ENCODE measurements at regions of chr7 and their contacts with region 1.

Region 1: DNA sequence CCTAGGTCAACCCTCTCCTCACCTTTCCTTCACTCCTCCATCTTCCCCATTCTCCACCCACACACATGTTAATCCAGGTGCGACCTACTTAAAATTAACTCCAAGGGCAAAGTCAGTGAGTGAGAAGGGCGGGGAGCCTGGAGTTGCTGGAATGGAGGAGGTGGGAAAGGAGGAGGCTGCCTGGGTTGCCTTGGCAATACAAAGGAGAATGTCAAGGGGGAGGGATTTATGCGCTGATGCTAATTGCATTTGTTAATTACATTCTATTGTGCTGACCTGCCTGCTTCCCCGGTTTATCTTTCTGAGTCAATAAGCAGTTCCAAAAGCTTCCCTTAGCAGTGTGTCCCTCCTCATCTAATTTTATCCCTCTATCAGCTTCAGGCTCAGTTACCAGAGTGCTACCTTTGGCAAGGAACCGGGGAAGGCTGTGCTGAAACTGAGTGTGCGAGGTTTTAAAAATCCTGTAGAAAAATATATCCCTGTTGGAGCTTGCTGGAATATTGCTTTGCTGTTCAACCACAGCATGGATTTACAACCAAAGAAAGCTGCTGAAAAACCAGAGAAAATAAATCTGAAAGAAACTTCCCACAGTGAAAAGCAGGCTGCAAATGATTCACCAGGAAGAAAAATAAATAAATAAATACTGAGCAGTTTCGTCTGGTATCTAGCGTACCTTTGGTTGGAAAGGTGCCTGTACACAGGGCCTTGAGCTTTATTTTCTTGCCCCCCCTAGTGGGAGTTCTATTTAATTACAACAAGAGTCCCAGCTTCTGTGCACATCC is 113.2 kb upstream of the DGKB start:
- DNase-seq: peak; percentile 80
- H3K4me3 ChIP-seq: peak overlapping the region in 2 of 3 experiments; percentile 32 to 42
- H3K27ac ChIP-seq: peak overlapping the region; percentile 63
- H3K4me1 ChIP-seq: peaks cover 20% of the 10 kb centered on the region
- H3K27me3 ChIP-seq: no peaks in the 10 kb centered on the region
- CTCF ChIP-seq: peak; percentile 52 to 72

Region 2: GRCh38 chr7:14995774-14996173 is 20.0 kb before region 1 on chr7:
- CTCF ChIA-PET with region 1: no interaction called
- dilution Hi-C with region 1: no loop called
- in situ Hi-C with region 1: no loop called
- intact Hi-C with region 1: no loop called
- DNase-seq: no peak
- H3K4me3 ChIP-seq: no peak overlapping the region
- H3K27ac ChIP-seq: no peak overlapping the region
- H3K4me1 ChIP-seq: no peaks in the 10 kb centered on the region
- H3K27me3 ChIP-seq: no peaks in the 10 kb centered on the region
- CTCF ChIP-seq: no peak

Region 3: DNA sequence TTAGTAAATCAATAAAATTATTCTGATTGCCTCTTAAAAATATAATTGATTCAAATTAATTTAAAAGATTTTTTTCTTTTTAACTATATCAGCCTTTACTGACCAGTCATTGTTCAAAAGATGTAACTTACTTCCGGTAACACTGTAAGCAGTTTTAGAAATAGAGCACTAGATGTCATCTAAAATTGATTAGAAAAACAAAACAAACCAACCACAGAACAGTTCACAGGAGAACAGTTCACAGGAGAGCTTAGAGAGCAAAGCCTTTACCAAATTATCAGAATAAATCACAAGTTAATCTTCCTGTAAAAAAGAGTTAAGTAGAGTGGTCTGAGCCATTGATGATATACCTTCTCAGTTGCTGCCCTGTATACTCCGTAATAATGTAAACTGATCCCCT is 20.1 kb after region 1 on chr7:
- CTCF ChIA-PET with region 1: no interaction called
- dilution Hi-C with region 1: no loop called
- in situ Hi-C with region 1: no loop called
- intact Hi-C with region 1: loop called (anchors 1 kb)
- DNase-seq: no peak
- H3K4me3 ChIP-seq: no peak overlapping the region
- H3K27ac ChIP-seq: no peak overlapping the region
- H3K4me1 ChIP-seq: no peaks in the 10 kb centered on the region
- H3K27me3 ChIP-seq: no peaks in the 10 kb centered on the region
- CTCF ChIP-seq: no peak

Measured in mammary epithelial cell (primary cell).